Esophagus muscularis mucosa (tissue), 4 donors: ENCODE measurements at regions of chr1 and their contacts with region 1.

Region 1: DNA sequence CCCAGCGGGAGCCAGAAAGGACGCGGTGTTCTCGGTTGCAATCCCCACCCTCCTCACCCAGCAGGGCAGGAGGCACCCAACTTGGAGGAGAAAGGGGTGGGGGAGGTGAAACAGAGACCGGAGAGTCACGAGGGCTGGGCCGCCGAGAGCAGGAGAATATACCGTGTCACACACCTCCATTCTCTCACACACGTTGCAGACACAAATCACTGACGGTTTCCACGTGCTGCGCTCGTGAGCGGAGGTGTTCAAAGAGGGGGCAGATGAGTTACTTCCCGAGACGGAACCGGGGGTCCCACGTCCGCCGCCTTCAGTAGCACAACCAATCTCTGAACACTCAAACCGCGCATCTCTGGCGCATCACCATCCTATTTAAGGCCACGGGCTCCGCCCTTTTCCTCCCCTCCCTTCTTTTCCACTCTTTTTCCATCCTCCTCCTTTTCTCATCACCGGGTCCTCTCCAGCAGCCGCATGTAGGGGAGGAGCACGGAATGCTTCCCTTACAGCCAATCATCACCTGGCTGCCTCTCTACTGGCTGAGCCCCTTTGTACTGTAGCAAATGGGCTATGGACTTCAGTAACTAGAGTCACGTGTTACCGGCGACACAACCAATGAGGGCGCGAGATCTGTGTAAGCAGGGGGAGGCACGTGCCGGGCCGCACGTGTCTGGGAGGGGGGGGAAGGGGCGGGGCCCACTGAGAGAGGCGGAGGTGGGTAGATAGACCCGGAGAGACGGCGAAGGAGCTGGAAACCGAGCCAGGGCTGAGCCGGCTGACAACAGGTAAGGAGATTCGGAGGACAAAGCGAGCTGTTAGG is at the start of gene CIART:
- DNase-seq: peak; percentile 99
- H3K4me3 ChIP-seq: peak within 1 kb of the TSS; percentile 62 to 77 (median 69)
- H3K27ac ChIP-seq: peak within 1 kb of the TSS; percentile 91 to 96 (median 95)
- H3K4me1 ChIP-seq: peaks cover 23 to 49% (median 46%) of the 10 kb centered on the region in 4 donors
- H3K27me3 ChIP-seq: no peaks in the 10 kb centered on the region
- CTCF ChIP-seq: no peak
- EP300 ChIP-seq: peak; percentile 81
- POLR2A ChIP-seq: peak; percentile 2
- total RNA-seq, gene CIART: 13.7 to 26.0 (median 14.2) TPM

Region 2: DNA sequence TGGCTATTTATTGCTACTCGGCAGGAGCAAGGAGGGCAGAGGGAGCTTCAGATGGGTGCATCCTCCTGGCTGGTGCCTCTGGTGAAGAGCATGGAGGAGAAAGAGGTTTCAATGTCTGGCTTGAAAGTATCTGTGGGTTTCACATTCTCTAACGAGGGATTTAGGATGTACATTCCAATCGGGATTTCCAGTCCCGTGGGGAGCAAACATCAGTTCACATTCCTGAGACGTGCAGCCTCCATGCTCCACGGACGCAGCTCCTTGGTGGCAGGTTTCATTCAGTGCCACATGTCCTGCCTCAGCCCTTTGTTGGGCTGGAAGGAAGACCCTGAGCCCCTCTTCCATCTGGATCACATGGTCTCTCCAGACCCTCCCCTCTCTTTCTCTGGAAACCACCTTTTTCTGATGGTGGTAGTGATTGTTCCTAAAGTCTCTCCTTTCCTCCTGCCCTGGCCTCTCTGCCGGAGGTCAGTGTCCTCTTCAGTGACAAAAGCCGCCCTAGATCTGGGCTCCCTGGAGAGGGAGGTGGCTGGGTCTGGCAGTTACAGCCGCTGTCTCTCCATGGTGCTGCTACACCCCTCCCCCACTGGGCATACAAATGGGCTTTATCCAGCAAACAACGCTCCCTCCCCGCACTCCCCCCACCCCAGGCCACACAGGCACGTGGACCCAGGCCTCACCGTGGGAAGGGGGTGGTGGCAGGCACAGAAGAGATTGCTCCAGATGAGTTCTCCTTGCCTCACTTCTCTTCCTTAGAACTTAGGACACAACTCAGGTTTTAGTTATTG is 25.3 kb before region 1 on chr1:
- intact Hi-C with region 1: loop called (anchors 2 kb)
- DNase-seq: no peak
- H3K4me3 ChIP-seq: peak overlapping the region in 2 of 4 donors; percentile 19 to 35
- H3K27ac ChIP-seq: peak overlapping the region; percentile 71 to 85 (median 81)
- H3K4me1 ChIP-seq: peaks cover 13 to 54% (median 45%) of the 10 kb centered on the region in 4 donors
- H3K27me3 ChIP-seq: no peaks in the 10 kb centered on the region
- CTCF ChIP-seq: no peak
- EP300 ChIP-seq: no peak
- POLR2A ChIP-seq: no peak